ENCODE measurements at regions of chr10 and their contacts with region 1.

Region 1: DNA sequence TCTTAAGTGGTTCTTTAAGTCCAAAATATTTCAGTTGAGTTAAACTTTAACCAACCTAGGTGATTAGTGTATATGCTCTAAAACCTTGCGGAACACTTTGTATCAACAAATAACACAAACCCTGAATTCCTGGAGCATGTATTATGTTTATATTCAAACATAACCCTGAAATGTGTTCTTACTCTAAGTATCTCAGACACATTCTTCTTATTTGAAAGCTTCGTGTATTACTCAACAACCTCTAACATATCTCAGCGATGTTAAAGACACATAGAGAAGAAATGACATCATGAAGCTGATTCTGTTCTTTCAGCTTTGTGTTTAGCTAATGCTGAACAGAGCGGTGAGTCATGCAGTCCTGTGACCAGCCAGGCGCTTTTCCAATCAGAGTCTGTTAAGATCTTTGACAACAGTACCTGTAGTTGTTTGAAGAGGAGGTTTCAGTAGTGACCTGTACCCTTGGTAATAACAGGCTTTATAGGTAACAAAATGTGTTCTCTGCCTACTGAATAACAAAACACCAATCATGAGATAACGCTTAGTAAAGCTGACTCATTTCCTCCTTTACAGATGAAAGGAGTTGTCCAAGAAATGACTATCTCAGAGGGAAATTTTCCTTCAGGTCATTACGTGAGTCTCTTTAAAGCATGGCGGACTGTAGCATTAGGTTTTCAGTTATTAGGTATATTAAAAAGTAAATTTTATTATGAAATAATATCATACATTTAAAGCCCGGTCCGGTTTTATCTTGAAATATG is 67.3 kb upstream of the KLF6 start:
- DNase-seq: peak; percentile 68
- ATAC-seq: peak; percentile 98
- H3K4me3 Mint-ChIP-seq: no peak overlapping the region
- H3K27ac Mint-ChIP-seq: peak overlapping the region; percentile 54
- H3K4me1 Mint-ChIP-seq: peaks cover 29% of the 10 kb centered on the region
- H3K27me3 Mint-ChIP-seq: no peaks in the 10 kb centered on the region

Region 2: DNA sequence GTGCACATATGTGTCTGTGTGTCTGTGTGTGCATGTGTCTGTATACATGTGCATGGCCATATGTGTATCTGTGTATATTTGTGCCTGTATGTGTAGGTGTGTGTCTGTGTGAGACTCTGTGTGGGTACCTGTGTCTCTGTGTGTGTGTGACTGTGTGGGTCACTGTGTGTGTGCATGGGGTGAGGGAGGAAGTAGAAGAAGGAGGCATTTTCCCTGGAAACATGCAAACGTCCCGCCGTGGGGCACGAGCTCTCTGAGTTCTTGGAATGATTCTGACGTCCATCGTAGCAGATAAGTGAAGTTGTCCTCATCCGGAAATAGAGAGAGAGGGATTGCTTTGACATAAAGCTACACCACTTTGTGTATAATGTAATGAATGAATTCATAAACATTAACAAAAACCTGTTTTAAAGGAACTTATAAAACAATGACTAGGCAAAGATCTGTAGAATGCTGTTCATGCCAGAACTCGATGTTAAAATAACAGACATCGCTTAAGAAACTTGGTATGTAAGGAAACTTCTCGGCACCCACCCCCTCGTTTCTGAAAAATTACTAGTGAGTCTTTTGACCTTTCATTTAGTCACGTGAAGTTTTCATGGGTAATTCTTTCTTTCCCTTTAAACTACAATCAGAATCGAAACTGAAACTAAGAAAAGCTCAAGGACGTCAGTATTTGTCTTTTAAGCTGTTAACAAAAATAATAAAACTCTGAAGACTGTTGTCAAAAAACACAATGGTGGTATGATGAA is 23.7 kb before region 1 on chr10:
- CTCF ChIA-PET with region 1: interaction called, 10 read pairs
- POLR2A ChIA-PET with region 1: interaction called, 11 read pairs
- DNase-seq: no peak
- ATAC-seq: peak; percentile 56
- H3K4me3 Mint-ChIP-seq: peak overlapping the region; percentile 59
- H3K27ac Mint-ChIP-seq: peak overlapping the region; percentile 91
- H3K4me1 Mint-ChIP-seq: peaks cover 45% of the 10 kb centered on the region
- H3K27me3 Mint-ChIP-seq: no peaks in the 10 kb centered on the region

Region 3: DNA sequence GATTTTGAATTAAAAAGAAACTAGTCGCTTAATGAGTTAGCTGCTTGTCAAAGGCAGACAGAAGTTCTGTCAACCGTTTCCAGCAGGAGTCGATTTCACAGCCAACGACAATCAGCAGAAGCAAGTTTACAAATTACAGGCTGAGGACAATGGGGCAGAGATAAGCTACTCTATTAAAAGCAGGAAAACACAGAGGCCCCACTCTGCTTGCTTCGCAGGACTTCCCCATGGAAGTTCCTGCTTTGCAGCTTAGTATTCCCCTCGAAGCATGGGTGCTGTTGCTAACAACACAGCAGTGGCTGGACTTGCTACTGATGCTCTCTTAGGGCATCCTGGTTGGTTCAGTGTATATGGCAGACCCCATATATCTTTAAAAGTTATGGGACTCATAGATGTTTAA is 16.6 kb before region 1 on chr10:
- CTCF ChIA-PET with region 1: interaction called, 5 read pairs
- POLR2A ChIA-PET with region 1: interaction called, 11 read pairs
- DNase-seq: no peak
- ATAC-seq: no peak
- H3K4me3 Mint-ChIP-seq: no peak overlapping the region
- H3K27ac Mint-ChIP-seq: no peak overlapping the region
- H3K4me1 Mint-ChIP-seq: peaks cover 45% of the 10 kb centered on the region
- H3K27me3 Mint-ChIP-seq: no peaks in the 10 kb centered on the region

Region 4: GRCh38 chr10:4013651-4014121 is 161.4 kb after region 1 on chr10:
- CTCF ChIA-PET with region 1: no interaction called
- POLR2A ChIA-PET with region 1: no interaction called
- DNase-seq: no peak
- ATAC-seq: no peak
- H3K4me3 Mint-ChIP-seq: no peak overlapping the region
- H3K27ac Mint-ChIP-seq: peak overlapping the region; percentile 11
- H3K4me1 Mint-ChIP-seq: peaks cover 17% of the 10 kb centered on the region
- H3K27me3 Mint-ChIP-seq: no peaks in the 10 kb centered on the region

Region 5: GRCh38 chr10:4046030-4046429 is 193.7 kb after region 1 on chr10:
- CTCF ChIA-PET with region 1: no interaction called
- POLR2A ChIA-PET with region 1: no interaction called
- DNase-seq: no peak
- ATAC-seq: no peak
- H3K4me3 Mint-ChIP-seq: no peak overlapping the region
- H3K27ac Mint-ChIP-seq: no peak overlapping the region
- H3K4me1 Mint-ChIP-seq: no peaks in the 10 kb centered on the region
- H3K27me3 Mint-ChIP-seq: no peaks in the 10 kb centered on the region

Measured in activated CD8-positive, alpha-beta T cell treated with anti-CD3 and anti-CD28 coated beads, Interleukin-2, amount 10 ng/mL, durations not matched to agents 7 days and 5 days (primary cell).